Activated CD4-positive, alpha-beta memory T cell treated with anti-CD3 and anti-CD28 coated beads, Interleukin-2, amount 10 ng/mL, durations not matched to agents 7 days and 5 days (primary cell): ENCODE measurements at regions of chr17 and their contacts with region 1.

Region 1: DNA sequence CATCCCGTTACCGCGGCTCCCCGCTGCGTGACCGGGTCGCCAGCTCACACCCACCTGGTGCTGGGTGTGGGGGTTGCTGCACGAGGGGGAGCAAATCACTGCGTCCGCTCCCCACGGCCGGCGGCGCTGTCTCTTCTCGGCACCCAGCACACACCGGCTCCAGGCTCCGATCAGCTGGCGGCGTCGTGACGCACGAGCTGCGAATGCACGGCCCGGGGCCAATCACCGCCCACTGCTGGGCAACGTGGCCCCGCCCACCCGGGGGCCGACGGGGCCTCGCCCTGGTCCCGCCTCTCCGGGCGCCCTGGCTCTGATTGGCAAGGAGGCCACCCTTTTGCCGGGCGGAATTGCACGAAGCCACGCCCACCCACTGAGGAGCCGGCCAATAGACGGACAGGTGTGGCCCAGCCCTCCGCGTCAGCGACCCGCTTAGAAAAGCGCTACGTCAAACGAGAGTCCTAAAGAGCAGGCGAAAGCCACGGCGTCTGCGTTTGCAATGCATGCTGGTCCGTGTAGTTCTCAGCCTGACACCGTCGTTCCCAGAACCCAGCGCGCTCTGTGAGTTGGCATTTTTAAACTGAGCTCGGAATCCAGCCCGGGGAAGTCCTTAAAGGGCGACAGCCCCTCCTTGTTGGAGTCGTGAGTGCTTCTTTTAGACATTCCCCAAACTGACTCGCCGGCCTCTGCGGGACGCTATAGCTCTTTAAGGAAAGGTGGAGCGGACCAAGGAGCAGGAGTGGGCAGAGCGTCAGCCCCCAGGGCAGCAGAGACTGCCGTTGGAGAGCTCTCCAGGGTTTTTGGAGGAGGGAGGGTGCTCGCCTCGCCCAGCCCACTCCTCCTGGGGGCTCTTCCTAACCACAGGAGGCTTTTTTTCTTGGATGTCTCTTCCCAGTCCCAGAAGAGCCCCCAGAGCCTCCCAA is 6.2 kb upstream of the TLCD2 start:
- DNase-seq: peak; percentile 100
- H3K4me3 Mint-ChIP-seq: peak overlapping the region; percentile 91
- H3K27ac Mint-ChIP-seq: peak overlapping the region; percentile 98
- H3K4me1 Mint-ChIP-seq: peaks cover 62% of the 10 kb centered on the region
- H3K27me3 Mint-ChIP-seq: no peaks in the 10 kb centered on the region

Region 2: DNA sequence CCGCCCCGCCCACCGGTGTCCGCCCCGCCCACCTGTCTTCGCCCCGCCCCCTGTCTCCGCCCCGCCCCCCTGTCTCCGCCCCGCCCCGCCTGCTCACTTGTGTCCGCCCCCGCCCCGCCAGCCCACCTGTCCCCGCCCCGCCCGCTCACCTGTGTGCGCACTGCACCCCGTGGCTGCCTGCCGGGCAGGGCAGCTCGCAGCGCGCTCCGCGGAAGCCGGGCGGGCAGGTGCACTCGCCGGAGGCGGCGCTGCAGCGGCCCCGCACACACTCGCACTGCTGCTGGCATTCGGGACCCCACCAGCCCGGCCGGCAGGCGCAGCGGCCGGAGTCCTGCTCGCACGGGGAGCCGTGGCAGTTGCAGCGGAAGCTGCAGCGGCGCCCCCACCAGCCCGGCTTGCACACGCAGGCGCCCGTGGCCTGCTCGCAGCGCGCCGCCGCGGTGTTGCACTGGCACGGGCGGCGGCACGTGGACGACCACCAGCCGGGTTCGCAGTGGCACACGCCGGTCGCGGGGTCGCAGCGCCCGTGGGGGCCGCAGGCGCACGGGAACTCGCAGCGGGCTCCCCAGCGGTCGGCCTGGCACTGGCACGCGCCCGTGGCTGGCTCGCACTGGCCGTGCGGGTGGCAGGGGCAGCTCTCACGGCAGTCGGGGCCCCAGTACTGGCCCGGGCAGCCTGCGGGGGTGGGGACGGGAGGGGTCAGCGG is 72.9 kb before region 1 on chr17:
- CTCF ChIA-PET with region 1: interaction called, 9 read pairs
- POLR2A ChIA-PET with region 1: interaction called, 11 read pairs
- DNase-seq: peak; percentile 62
- H3K4me3 Mint-ChIP-seq: peak overlapping the region; percentile 72
- H3K27ac Mint-ChIP-seq: no peak overlapping the region
- H3K4me1 Mint-ChIP-seq: peaks cover 31% of the 10 kb centered on the region
- H3K27me3 Mint-ChIP-seq: no peaks in the 10 kb centered on the region

Region 3: DNA sequence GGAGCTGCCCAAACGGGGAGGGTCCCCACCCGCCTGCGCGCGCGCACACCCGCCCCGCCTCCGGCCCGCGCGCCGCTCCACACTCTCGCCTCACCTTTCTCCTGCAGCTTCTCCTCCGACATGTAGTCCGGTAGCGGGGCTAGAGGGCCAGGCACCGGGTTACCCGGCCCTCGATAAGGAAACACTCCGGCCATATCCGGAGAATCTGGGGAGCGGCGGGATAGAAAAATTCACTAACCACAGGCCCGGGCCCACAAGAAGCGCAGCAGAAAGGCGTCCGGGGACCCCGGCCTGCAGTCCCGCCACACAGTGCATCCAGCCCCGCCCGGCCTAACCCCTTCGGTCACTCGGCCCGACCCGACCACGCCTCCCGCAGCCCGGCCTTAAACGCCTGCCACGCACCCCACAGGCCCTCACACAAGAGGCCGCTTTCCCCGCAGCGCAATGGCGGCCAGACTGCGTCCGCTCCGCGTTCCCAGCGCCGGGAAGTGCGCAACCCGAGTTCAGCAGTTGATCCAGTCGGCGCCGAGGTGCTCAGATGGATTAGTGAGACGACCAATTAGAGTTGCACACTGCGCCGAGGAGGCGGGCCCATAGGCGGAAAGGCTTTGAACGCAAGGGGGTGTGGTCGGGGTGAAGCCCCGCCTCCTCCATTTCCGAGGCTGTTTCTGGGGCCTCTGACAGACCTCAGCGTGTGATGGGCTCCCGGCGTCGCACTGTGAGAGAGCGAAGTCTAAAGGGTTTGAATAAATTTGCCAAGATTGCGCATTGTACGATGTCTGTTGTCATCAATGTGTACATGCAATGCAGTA is 31.8 kb before region 1 on chr17 and contains the start of gene PRPF8:
- CTCF ChIA-PET with region 1: interaction called, 3 read pairs
- POLR2A ChIA-PET with region 1: interaction called, 58 read pairs
- DNase-seq: peak; percentile 99
- H3K4me3 Mint-ChIP-seq: peak within 1 kb of the TSS; percentile 99
- H3K27ac Mint-ChIP-seq: peak within 1 kb of the TSS; percentile 94
- H3K4me1 Mint-ChIP-seq: peaks cover 38% of the 10 kb centered on the region
- H3K27me3 Mint-ChIP-seq: no peaks in the 10 kb centered on the region
- total RNA-seq, gene PRPF8: 264 to 267 TPM

Region 4: DNA sequence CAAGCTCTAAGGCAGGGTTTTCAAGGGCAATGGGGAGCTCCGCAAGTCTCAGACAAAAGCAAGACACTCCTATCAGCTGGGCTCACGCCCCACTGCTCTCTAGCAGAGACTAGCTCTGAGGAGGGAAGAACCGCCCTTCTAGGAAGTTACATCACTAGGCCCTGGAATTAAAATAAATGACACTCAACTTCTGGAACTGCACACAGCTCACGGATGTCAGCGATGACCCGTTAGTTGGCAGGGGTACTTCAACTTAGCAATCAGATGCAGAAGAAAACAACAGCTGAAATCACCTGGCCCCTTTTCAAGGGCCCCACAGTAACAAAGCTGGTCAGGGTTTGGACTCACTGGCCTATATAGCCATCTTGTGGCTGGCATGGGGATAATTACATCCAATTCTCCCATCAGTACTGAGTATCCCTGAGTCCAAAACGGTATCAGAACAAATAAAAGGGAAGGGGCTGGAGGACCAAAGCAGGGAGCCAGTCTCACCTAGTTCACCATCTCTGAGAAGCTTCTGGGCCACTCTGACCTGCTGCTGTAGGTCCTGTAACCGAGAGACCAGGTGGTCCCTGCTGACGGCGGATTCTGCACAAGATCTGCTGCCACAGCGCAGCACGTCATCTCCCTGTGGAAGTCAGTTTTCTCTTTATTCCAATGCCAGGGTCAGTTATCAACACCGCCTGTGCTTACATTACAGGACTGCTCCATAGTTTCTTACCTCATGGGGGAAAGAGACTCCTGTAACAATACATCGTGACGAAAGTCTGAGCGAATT is 67.7 kb after region 1 on chr17:
- CTCF ChIA-PET with region 1: interaction called, 46 read pairs
- POLR2A ChIA-PET with region 1: interaction called, 10 read pairs
- DNase-seq: no peak
- H3K4me3 Mint-ChIP-seq: no peak overlapping the region
- H3K27ac Mint-ChIP-seq: no peak overlapping the region
- H3K4me1 Mint-ChIP-seq: peaks cover 5% of the 10 kb centered on the region
- H3K27me3 Mint-ChIP-seq: no peaks in the 10 kb centered on the region

Region 5: GRCh38 chr17:1870592-1870991 is 154.3 kb after region 1 on chr17:
- CTCF ChIA-PET with region 1: interaction called, 22 read pairs
- POLR2A ChIA-PET with region 1: interaction called, 37 read pairs
- DNase-seq: no peak
- H3K4me3 Mint-ChIP-seq: peak overlapping the region; percentile 21
- H3K27ac Mint-ChIP-seq: peak overlapping the region; percentile 81
- H3K4me1 Mint-ChIP-seq: peaks cover 62% of the 10 kb centered on the region
- H3K27me3 Mint-ChIP-seq: no peaks in the 10 kb centered on the region

Region 6: DNA sequence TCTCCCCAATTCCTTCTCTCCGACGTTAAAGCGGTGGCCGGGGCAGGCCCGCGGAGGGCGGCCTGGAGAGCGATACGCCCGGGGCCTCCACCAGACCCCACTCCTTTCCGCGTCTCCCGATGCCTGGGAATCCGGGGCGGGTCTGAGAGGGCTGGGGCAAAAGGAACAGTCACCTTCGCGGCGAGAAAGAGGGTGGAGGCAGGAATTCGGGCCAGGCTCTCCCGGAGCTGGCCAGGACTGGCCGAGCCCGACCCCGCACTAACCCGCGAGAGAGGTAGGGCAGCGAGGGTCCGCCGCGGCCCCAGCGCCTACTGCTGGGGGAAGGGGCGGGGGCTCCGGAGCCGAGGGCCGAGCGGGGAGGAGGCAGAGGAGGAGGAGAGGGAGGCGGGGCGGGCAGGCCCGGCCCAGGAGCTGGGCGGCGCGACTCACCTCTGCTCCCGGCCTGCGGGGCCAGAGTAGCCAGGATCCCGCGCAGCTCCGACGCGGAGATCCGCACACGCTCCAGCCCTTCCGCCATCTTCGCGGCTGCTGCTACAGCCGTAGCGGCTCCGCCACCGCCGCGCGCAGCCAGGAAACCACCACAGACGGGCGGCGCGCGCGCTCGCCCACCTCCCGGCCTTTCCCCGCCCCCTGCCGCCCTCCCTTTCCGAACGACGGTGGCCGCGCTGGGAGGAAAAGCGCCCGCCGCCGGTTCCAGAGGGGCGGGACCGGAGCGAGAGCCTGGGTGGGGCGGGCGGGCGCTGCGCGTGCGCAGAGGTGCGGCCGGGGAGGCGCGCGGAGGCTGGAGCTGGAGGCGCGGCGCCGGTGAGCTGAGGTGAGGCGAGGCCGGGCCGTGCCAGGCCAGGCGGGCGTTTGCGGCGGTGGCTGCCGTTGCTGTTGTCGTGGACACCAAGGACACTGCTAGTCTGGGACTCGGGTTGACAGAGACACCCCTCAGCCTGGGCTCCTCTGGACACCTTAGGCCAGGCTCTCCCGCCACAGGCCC is 587.2 kb after region 1 on chr17 and contains the starts of genes SMG6 and SRR:
- CTCF ChIA-PET with region 1: no interaction called
- POLR2A ChIA-PET with region 1: interaction called, 10 read pairs
- DNase-seq: peak; percentile 96
- H3K4me3 Mint-ChIP-seq: peak within 1 kb of the TSS; percentile 92
- H3K27ac Mint-ChIP-seq: peak within 1 kb of the TSS; percentile 73
- H3K4me1 Mint-ChIP-seq: peaks cover 49% of the 10 kb centered on the region
- H3K27me3 Mint-ChIP-seq: no peaks in the 10 kb centered on the region
- total RNA-seq, gene SMG6: 37.8 to 38.7 TPM
- total RNA-seq, gene SRR: 19.3 to 19.5 TPM